ENCODE measurements at regions of chr6 and their contacts with region 1.

Region 1: GRCh38 chr6:16690608-16691198 is 70.6 kb downstream of the ATXN1 start:
- DNase-seq: no peak
- H3K4me3 Mint-ChIP-seq: peak overlapping the region; percentile 70
- H3K27ac Mint-ChIP-seq: peak overlapping the region; percentile 98
- H3K4me1 Mint-ChIP-seq: peaks cover 90% of the 10 kb centered on the region
- H3K27me3 Mint-ChIP-seq: no peaks in the 10 kb centered on the region

Region 2: GRCh38 chr6:15770347-15771143 is 920.2 kb before region 1 on chr6:
- intact Hi-C with region 1: loop called (anchors 10 kb)
- DNase-seq: no peak
- H3K4me3 Mint-ChIP-seq: no peak overlapping the region
- H3K27ac Mint-ChIP-seq: peak overlapping the region; percentile 90
- H3K4me1 Mint-ChIP-seq: peaks cover 28% of the 10 kb centered on the region
- H3K27me3 Mint-ChIP-seq: no peaks in the 10 kb centered on the region

Region 3: GRCh38 chr6:16564436-16564835 is 126.3 kb before region 1 on chr6:
- intact Hi-C with region 1: no loop called
- DNase-seq: no peak
- H3K4me3 Mint-ChIP-seq: no peak overlapping the region
- H3K27ac Mint-ChIP-seq: no peak overlapping the region
- H3K4me1 Mint-ChIP-seq: peaks cover 12% of the 10 kb centered on the region
- H3K27me3 Mint-ChIP-seq: no peaks in the 10 kb centered on the region

Region 4: GRCh38 chr6:16591396-16592222 is 99.1 kb before region 1 on chr6:
- intact Hi-C with region 1: loop called (anchors 5 kb)
- DNase-seq: no peak
- H3K4me3 Mint-ChIP-seq: no peak overlapping the region
- H3K27ac Mint-ChIP-seq: peak overlapping the region; percentile 87
- H3K4me1 Mint-ChIP-seq: peaks cover 38% of the 10 kb centered on the region
- H3K27me3 Mint-ChIP-seq: no peaks in the 10 kb centered on the region

Region 5: DNA sequence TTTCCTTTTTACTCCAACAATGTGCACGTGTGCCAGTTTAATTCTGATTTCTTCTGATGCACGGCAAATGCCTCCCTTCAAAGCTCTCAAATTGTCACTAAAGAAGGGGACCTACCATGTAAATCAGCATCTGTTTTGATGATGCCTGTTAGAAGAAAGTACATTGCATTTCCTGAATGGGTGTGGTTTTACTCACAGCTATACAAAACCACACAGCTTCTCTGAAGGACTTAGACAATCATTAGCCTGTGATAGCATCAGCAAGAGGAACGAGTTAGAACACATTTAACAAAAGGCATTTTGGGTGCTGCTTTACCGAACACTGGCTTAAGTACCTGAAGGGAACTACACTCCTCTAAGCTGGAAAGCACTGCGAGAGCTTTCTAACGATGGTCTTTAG is 38.8 kb before region 1 on chr6:
- intact Hi-C with region 1: no loop called
- DNase-seq: peak; percentile 42
- H3K4me3 Mint-ChIP-seq: peak overlapping the region; percentile 20
- H3K27ac Mint-ChIP-seq: peak overlapping the region; percentile 87
- H3K4me1 Mint-ChIP-seq: peaks cover 59% of the 10 kb centered on the region
- H3K27me3 Mint-ChIP-seq: no peaks in the 10 kb centered on the region

Region 6: GRCh38 chr6:16704401-16705045 is 13.8 kb after region 1 on chr6:
- intact Hi-C with region 1: loop called (anchors 1 kb)
- DNase-seq: peak; percentile 48
- H3K4me3 Mint-ChIP-seq: peak overlapping the region; percentile 83
- H3K27ac Mint-ChIP-seq: peak overlapping the region; percentile 89
- H3K4me1 Mint-ChIP-seq: peaks cover 63% of the 10 kb centered on the region
- H3K27me3 Mint-ChIP-seq: no peaks in the 10 kb centered on the region

Region 7: DNA sequence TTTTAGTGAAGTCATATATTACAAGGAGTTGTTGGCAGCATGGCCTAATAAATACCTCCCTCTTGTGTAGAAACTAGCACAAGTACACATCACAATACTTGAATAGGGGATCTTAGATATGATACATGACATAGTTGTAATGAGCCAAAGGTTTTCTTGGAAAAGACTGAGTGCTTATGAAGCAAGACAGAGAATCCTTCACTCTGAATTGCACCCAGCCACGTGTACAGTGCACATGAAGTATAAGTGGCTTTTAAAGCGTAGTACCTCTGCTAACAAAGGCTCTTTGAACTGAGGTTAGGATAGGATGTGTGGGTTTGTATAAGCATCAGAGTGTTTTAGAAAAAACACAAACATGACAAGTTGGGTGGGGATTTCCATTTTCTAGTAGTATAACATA is 265.7 kb after region 1 on chr6:
- intact Hi-C with region 1: loop called (anchors 10 kb)
- DNase-seq: no peak
- H3K4me3 Mint-ChIP-seq: no peak overlapping the region
- H3K27ac Mint-ChIP-seq: peak overlapping the region; percentile 59
- H3K4me1 Mint-ChIP-seq: peaks cover 14% of the 10 kb centered on the region
- H3K27me3 Mint-ChIP-seq: peaks cover 3% of the 10 kb centered on the region

Region 8: GRCh38 chr6:17250237-17250636 is 559.5 kb after region 1 on chr6:
- intact Hi-C with region 1: no loop called
- DNase-seq: no peak
- H3K4me3 Mint-ChIP-seq: no peak overlapping the region
- H3K27ac Mint-ChIP-seq: no peak overlapping the region
- H3K4me1 Mint-ChIP-seq: no peaks in the 10 kb centered on the region
- H3K27me3 Mint-ChIP-seq: no peaks in the 10 kb centered on the region